ENCODE measurements at regions of chr1 and their contacts with region 1.

Region 1: DNA sequence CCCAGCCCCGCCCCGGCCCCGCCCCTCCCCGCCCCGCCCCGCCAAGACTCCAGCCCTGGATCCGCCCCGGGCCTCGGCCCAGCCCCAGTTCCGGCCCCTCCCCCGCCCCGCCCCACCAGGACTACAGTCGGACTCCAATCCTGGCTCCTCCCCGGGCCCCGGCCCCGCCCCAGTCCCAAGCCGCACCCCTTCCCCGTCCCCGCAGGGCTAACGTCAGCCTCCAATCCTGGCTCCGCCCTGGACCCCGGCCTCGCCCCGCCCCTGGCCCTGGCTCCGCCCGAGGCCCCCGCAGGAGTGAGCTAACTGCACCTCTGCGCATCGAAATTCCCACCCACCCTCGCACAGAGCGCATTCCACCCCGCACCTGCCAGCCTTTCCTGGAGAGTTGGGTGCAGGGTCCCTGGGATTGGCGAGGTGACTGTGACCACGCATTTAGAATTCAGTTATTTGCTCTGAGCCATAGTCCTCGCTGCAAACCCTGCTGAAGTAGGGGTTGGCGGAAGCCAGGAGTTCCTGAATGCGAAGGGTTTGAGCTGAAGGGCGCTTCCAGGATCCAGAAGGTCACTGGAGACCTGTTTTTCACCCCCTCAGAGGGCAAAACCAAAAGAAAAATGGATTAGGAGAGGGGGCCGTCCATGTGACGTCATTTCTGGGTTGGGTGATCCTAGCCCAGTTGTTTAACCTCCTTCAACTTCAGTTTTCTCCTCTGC is 588 bp upstream of the IGSF8 start:
- DNase-seq: peak; percentile 94 to 98 (median 96)
- ATAC-seq: peak; percentile 90
- H3K4me3 ChIP-seq: peak overlapping the region; percentile 85
- H3K4me3 Mint-ChIP-seq: peak overlapping the region; percentile 74 to 95 (median 86)
- H3K27ac ChIP-seq: peak overlapping the region; percentile 96
- H3K27ac Mint-ChIP-seq: peak overlapping the region; percentile 88 to 99 (median 97)
- H3K4me1 ChIP-seq: peaks cover 28 to 49% of the 10 kb centered on the region in 2 donors
- H3K4me1 Mint-ChIP-seq: peaks cover 36 to 84% (median 64%) of the 10 kb centered on the region in 7 donors
- H3K27me3 ChIP-seq: no peaks in the 10 kb centered on the region
- H3K27me3 Mint-ChIP-seq: no peaks in the 10 kb centered on the region

Region 2: DNA sequence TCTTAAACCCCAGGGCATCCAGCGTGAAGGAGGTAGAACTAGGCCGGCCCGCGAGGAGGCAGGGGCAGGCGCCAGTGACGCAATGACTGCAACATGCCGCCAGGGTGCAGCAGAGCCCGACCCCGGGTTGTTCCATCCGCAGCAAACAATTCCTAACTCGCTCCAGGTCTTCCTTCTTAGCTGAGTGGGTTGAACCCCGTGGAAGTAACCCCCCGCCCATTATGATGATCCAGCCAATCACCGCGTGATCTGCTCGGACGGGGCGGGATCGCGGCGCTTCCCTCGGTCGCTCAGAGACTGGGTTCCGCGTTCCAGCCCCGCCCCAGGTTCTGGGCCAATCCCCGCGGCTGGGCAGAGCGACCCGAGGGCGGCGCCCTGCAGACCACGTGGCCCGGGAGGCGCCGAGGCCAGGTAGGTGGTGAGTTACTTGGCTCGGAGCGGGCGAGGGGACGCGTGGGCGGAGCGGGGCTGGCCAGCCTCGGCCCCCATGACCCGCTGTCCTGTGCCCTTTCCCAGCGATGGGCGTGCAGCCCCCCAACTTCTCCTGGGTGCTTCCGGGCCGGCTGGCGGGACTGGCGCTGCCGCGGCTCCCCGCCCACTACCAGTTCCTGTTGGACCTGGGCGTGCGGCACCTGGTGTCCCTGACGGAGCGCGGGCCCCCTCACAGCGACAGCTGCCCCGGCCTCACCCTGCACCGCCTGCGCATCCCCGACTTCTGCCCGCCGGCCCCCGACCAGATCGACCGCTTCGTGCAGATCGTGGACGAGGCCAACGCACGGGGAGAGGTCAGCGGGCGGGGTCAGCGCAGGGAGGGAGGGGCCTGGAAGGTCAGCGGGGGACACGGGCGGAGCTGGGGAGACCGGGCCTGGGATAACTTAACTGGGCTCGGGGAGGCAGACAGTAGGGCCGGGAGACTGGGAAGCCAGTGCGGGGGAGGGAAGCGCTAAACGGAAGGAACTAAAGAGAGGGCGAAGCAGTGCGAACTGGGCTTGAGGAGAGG is 318.1 kb before region 1 on chr1 and contains the start of gene DUSP23:
- CTCF ChIA-PET with region 1: no interaction called
- POLR2A ChIA-PET with region 1: no interaction called
- intact Hi-C with region 1: loop called (anchors 1 to 2 kb)
- DNase-seq: peak; percentile 88 to 96 (median 96)
- ATAC-seq: peak; percentile 97
- H3K4me3 ChIP-seq: peak within 1 kb of the TSS; percentile 69
- H3K4me3 Mint-ChIP-seq: peak within 1 kb of the TSS; percentile 78 to 93 (median 84)
- H3K27ac ChIP-seq: peak within 1 kb of the TSS; percentile 66
- H3K27ac Mint-ChIP-seq: peak within 1 kb of the TSS; percentile 2 to 94 (median 85)
- H3K4me1 ChIP-seq: peaks cover 6% of the 10 kb centered on the region in 2 donors
- H3K4me1 Mint-ChIP-seq: peaks cover 9 to 33% (median 28%) of the 10 kb centered on the region in 7 donors
- H3K27me3 ChIP-seq: no peaks in the 10 kb centered on the region
- H3K27me3 Mint-ChIP-seq: peaks cover 0 to 11% (median 0%) of the 10 kb centered on the region in 5 donors
- total RNA-seq, gene DUSP23: 7.4 to 18.9 (median 12.2) TPM

Region 3: GRCh38 chr1:160085686-160086455 is 13.1 kb before region 1 on chr1:
- CTCF ChIA-PET with region 1: interaction called, 73 read pairs
- POLR2A ChIA-PET with region 1: interaction called, 22 read pairs
- intact Hi-C with region 1: loop called (anchors 1 kb)
- DNase-seq: peak; percentile 55 to 81 (median 72)
- ATAC-seq: peak; percentile 81
- H3K4me3 ChIP-seq: no peak overlapping the region
- H3K4me3 Mint-ChIP-seq: peak overlapping the region in 6 of 10 donors; percentile 9 to 47 (median 34)
- H3K27ac ChIP-seq: no peak overlapping the region
- H3K27ac Mint-ChIP-seq: peak overlapping the region in 7 of 9 donors; percentile 46 to 80 (median 76)
- H3K4me1 ChIP-seq: peaks cover 0 to 7% of the 10 kb centered on the region in 2 donors
- H3K4me1 Mint-ChIP-seq: peaks cover 10 to 24% (median 20%) of the 10 kb centered on the region in 7 donors
- H3K27me3 ChIP-seq: peaks cover 8 to 9% of the 10 kb centered on the region in 2 donors
- H3K27me3 Mint-ChIP-seq: peaks cover 18 to 27% (median 19%) of the 10 kb centered on the region in 5 donors

Region 4: DNA sequence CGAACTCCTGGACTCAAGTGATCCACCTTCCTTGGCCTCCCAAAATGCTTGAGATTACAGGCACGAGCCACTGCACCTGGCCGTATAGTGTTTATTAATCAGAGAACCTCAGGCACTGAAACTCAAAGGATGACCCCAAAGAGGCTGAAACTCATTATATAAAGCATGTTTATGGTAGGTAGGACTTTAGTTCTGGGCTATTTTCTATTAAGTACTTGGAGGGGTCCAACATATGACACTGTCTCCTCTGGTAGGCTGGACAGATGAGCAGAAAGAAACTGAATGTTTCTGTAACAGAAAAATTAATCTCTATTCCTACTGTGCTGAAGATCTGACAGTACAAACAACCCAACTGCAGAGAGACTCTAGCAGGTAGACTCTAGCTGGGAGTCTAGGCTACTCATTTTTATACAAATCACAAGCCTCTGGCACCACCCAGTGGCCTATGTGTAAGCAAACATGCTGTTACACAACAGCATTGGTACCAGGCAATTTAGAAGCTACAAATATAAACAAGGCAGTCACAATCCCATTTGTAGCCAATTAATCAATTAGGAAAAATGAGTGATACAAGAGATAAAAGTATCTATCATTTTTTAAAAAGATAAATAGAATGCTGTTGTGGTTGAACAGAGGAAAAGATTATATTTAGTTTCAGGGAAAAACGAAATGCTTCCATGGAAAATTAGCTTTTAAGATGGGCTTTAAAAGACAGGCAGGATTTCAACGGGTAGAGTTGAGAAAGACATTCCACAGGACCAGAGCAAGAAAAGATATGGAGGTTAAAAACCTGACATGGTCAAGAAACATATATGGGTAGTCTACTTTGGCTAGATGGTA is 152.9 kb after region 1 on chr1:
- CTCF ChIA-PET with region 1: interaction called, 11 read pairs
- POLR2A ChIA-PET with region 1: no interaction called
- intact Hi-C with region 1: loop called (anchors 1 kb)
- DNase-seq: peak in 8 of 9 donors; percentile 43 to 70 (median 60)
- ATAC-seq: peak; percentile 99
- H3K4me3 ChIP-seq: no peak overlapping the region
- H3K4me3 Mint-ChIP-seq: no peak overlapping the region
- H3K27ac ChIP-seq: peak overlapping the region; percentile 6
- H3K27ac Mint-ChIP-seq: peak overlapping the region in 7 of 9 donors; percentile 46 to 80 (median 62)
- H3K4me1 ChIP-seq: no peaks in the 10 kb centered on the region
- H3K4me1 Mint-ChIP-seq: peaks cover 6 to 34% (median 30%) of the 10 kb centered on the region in 7 donors
- H3K27me3 ChIP-seq: no peaks in the 10 kb centered on the region
- H3K27me3 Mint-ChIP-seq: no peaks in the 10 kb centered on the region

Region 5: DNA sequence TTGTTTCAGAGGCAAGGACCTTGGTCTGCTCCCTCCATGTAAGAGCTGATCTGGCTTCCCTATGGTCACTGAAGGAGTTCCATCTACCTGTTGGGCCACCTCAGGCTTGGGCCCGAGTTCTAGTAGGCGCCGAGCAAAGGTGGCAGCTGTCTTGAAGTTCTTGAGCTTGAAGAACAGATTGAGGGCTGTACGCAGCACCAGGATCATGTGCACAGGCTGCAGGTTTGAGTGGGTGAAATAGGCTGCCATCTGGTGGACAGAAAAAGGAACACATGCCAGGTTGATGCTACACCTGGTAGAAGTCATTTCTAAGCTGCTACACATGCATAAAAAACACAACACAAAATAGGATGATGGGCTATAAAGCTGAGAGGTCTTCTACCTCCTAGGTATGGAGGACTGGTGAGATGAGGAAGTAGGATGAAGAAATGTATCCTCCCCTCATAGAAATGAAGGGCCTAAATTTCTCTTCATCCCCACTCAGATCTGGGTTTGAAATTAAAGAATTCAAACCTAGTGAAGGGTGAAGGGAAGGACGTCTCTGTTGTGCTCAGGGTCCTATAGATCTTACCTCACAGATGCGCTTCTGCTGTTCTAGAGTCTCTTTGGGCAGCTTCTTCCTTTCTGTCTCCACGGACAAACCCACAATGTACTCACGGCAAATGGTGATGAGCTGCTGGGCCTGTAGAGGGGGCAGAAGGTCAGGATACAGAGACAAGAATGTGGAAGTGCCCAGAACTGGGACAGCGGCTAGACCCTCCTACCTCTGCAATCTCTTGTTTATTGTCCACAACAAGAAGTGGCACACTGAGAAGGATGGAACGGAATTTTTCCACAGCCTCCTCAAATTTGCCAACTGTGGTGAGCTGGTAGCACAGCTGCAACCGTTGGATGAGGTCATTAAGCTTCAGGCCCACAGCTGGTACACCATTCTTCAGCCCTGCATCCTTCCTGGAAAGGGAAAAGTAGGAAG is 192.5 kb after region 1 on chr1:
- CTCF ChIA-PET with region 1: interaction called, 42 read pairs
- POLR2A ChIA-PET with region 1: interaction called, 12 read pairs
- intact Hi-C with region 1: loop called (anchors 1 kb)
- DNase-seq: peak; percentile 24 to 82 (median 74)
- ATAC-seq: peak; percentile 98
- H3K4me3 ChIP-seq: no peak overlapping the region
- H3K4me3 Mint-ChIP-seq: no peak overlapping the region
- H3K27ac ChIP-seq: no peak overlapping the region
- H3K27ac Mint-ChIP-seq: peak overlapping the region; percentile 0 to 88 (median 40)
- H3K4me1 ChIP-seq: peaks cover 0 to 3% of the 10 kb centered on the region in 2 donors
- H3K4me1 Mint-ChIP-seq: peaks cover 2 to 7% (median 6%) of the 10 kb centered on the region in 7 donors
- H3K27me3 ChIP-seq: no peaks in the 10 kb centered on the region
- H3K27me3 Mint-ChIP-seq: no peaks in the 10 kb centered on the region

Region 6: DNA sequence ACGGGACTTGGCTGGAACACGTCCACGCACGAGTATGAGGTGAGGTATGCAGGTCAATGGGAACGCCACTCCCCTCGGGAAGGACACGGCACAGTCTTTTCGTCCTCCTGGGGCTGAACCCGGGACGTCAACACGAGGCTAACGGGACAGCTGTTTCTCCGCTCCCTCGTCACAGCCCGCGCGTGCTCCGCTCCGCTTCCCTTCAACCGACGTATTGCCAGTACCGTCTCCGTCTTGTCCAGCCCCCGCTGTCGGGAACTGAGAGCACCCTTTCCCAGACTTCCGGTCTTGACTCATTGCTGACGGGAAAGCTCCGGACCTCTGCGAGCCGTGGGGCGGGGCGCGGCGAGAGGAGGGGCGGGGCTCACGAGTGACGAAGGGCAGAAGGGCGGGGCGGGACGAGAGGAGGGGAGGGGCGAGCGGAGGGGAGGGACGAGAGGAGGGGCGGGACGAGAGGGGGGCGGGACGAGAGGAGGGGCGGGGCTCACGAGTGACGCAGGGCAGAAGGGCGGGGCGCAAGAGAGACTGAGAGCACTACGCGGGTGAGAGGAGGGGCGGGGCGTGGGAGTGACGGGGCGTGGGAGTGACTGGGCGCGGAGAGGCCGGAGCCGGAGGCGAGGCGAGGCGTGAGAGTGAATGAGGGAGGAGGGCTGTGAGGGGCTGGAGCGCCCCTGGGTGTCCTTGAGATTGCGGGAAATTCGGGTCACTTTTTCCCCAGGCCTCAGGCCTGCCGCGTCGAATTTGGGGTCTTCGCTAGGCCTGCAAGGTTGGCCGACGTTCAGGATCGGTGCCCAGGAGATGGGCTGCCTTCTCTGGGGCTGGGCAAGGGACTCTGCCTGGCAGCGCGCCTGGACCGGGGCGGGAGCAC is 1290.9 kb after region 1 on chr1:
- CTCF ChIA-PET with region 1: no interaction called
- POLR2A ChIA-PET with region 1: interaction called, 3 read pairs
- intact Hi-C with region 1: loop called in 1 of 2 experiments (anchors 1 kb)
- DNase-seq: peak; percentile 85 to 96 (median 92)
- ATAC-seq: peak; percentile 97
- H3K4me3 ChIP-seq: peak overlapping the region; percentile 86
- H3K4me3 Mint-ChIP-seq: peak overlapping the region; percentile 88 to 95 (median 92)
- H3K27ac ChIP-seq: peak overlapping the region; percentile 93
- H3K27ac Mint-ChIP-seq: peak overlapping the region; percentile 93 to 99 (median 98)
- H3K4me1 ChIP-seq: peaks cover 3 to 4% of the 10 kb centered on the region in 2 donors
- H3K4me1 Mint-ChIP-seq: peaks cover 0 to 50% (median 28%) of the 10 kb centered on the region in 7 donors
- H3K27me3 ChIP-seq: no peaks in the 10 kb centered on the region
- H3K27me3 Mint-ChIP-seq: no peaks in the 10 kb centered on the region

Region 7: DNA sequence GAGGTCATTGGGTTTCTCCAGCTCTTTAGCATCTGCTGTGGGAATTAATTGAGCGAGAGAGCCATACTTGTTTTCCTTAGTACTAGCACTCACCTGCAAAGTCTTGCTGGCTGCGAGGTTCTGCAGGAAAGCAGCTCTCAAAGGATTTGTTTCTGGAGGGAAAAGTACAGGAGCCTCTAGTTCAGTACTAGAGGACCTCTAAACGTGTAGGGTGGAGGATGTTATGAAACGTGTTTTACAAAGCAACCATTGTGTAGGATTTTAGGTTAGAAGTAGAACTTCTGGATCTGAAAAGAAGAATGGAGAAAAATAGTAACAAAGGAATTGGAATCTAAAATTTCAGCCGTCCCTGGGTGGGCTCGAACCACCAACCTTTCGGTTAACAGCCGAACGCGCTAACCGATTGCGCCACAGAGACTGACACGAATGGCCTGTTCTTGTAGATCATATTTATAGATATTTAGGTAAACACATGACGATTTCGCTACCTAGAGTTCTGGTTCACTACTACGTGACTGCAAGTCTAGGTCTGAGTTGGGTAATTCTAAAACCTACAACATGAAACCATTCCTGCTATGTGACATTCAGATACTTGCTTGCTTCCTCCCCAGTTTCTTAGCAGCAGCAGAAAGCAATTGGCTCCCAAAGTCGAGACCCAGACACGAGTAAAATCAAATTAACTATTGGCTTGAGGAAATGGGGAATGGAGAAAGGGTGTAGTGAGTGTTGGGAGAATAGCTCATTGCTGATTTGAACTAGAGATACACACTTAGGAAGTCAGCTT is 1328.9 kb after region 1 on chr1:
- CTCF ChIA-PET with region 1: no interaction called
- POLR2A ChIA-PET with region 1: no interaction called
- intact Hi-C with region 1: no loop called
- DNase-seq: peak in 7 of 9 donors; percentile 32 to 51 (median 39)
- ATAC-seq: no peak
- H3K4me3 ChIP-seq: no peak overlapping the region
- H3K4me3 Mint-ChIP-seq: peak overlapping the region in 9 of 10 donors; percentile 32 to 77 (median 57)
- H3K27ac ChIP-seq: no peak overlapping the region
- H3K27ac Mint-ChIP-seq: peak overlapping the region in 6 of 9 donors; percentile 12 to 91 (median 74)
- H3K4me1 ChIP-seq: no peaks in the 10 kb centered on the region
- H3K4me1 Mint-ChIP-seq: peaks cover 0 to 23% (median 10%) of the 10 kb centered on the region in 7 donors
- H3K27me3 ChIP-seq: peaks cover 0 to 3% of the 10 kb centered on the region in 2 donors
- H3K27me3 Mint-ChIP-seq: peaks cover 47 to 58% (median 55%) of the 10 kb centered on the region in 5 donors

Measured in naive thymus-derived CD4-positive, alpha-beta T cell (primary cell).